ENCODE measurements at regions of chr7 and their contacts with region 1.

Region 1: GRCh38 chr7:91264046-91264923 is at the start of gene FZD1:
- DNase-seq: peak; percentile 95
- H3K4me3 ChIP-seq: peak within 1 kb of the TSS; percentile 72
- H3K27ac ChIP-seq: peak within 1 kb of the TSS; percentile 96
- H3K4me1 ChIP-seq: peaks cover 4% of the 10 kb centered on the region
- H3K27me3 ChIP-seq: no peaks in the 10 kb centered on the region
- CTCF ChIP-seq: no peak
- total RNA-seq, gene FZD1: 8.1 to 9.8 TPM

Region 2: GRCh38 chr7:91089382-91089963 is 174.8 kb before region 1 on chr7:
- intact Hi-C with region 1: loop called (anchors 10 kb)
- DNase-seq: no peak
- H3K4me3 ChIP-seq: no peak overlapping the region
- H3K27ac ChIP-seq: no peak overlapping the region
- H3K4me1 ChIP-seq: no peaks in the 10 kb centered on the region
- H3K27me3 ChIP-seq: no peaks in the 10 kb centered on the region
- CTCF ChIP-seq: peak; percentile 80

Region 3: DNA sequence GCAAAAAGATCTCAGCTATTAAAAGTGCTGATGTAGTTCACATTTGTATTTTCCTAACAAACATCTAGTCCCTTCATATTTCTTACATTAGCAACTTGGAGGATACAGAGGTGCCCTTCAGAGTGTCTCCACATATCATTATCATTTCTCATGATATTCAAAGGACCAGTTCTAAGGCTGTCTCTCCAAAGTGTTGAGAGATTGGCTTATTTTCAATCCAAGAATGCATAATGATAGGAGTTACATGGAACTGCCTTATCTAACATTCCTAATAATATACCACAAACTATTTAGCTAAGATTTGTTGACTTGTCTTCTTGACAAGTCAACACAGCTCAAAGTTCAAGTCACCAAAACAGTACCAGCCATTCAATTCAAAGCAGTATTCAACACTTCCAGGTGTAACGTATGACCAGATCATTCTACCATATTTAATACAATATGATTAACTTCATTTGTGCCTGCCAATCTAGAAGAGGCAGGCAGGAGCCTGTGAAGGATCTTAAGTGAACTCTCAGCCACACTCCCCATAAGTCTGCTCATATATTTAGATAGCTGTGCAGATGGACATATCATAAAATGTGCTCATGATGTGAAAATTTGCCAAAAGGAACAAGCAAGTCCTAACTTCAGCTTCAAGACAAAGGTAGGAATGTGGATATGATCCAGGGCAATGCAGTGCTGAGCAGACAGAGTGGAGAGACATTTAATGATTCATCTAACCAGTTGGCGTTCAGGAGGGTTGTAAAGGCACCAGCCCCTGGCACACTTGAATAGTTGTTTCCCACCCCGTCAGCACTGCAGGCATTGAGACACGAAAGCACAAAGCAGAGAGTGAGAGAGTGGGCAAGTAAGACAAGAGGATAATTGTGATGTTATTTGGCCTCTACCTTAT is 507.9 kb after region 1 on chr7:
- intact Hi-C with region 1: loop called (anchors 10 kb)
- DNase-seq: peak; percentile 36
- H3K4me3 ChIP-seq: no peak overlapping the region
- H3K27ac ChIP-seq: no peak overlapping the region
- H3K4me1 ChIP-seq: no peaks in the 10 kb centered on the region
- H3K27me3 ChIP-seq: no peaks in the 10 kb centered on the region
- CTCF ChIP-seq: no peak